ENCODE measurements at regions of chr6 and their contacts with region 1.

Region 1: GRCh38 chr6:143427109-143427817 is 23.2 kb downstream of the ADAT2 start:
- DNase-seq: no peak
- ATAC-seq: peak; percentile 100
- H3K4me3 ChIP-seq: no peak overlapping the region
- H3K27ac ChIP-seq: no peak overlapping the region
- H3K4me1 ChIP-seq: no peaks in the 10 kb centered on the region
- H3K27me3 ChIP-seq: no peaks in the 10 kb centered on the region
- CTCF ChIP-seq: peak; percentile 94 to 98 (median 96); a peak in 5 of 6 replicates
- EP300 ChIP-seq: no peak
- POLR2A ChIP-seq: no peak
- RAD21 ChIP-seq: peak; percentile 100

Region 2: DNA sequence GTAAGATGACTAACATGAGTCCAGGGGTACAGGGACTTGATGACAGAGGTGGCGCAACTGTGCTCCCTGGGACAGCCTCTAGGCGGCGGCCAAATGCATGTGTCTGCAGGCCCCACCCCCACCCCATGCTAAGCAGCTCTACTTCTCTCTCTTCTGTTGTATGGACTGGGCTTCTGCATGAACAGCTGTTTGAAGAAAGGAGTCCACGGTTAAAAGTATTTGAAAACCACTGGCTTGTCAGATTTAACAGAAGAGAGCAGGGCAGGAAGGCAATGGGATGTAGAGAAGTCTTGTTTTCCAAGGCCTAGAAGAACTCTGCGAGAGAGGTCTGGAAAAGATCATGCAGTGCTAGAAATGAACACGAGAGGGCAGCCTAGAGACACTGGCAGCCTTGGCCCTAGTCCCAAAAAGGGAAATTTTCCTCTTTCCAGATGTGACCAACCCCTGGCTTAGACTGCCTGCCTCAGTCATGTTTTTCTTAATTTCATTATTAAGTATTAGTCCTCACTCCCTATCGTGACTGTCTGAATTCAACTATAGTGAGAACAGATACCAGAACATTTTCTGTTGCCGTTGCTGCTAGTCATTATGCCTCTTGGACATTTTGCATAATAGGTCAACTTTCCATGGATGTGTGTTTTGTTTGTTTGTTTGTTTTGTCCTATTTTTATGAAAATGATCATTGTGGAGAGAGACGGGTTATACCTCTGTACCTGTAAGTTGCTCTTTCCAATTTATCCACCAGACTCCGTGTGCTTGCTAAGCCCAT is 860.5 kb before region 1 on chr6:
- CTCF ChIA-PET with region 1: interaction called, 7 read pairs
- POLR2A ChIA-PET with region 1: no interaction called
- RAD21 ChIA-PET with region 1: interaction called, 12 read pairs
- SMC1A ChIA-PET with region 1: interaction called, 3 read pairs
- in situ Hi-C with region 1: no loop called
- intact Hi-C with region 1: loop called (anchors 5 kb)
- DNase-seq: peak; percentile 11
- ATAC-seq: peak; percentile 81
- H3K4me3 ChIP-seq: no peak overlapping the region
- H3K27ac ChIP-seq: no peak overlapping the region
- H3K4me1 ChIP-seq: no peaks in the 10 kb centered on the region
- H3K27me3 ChIP-seq: no peaks in the 10 kb centered on the region
- CTCF ChIP-seq: peak; percentile 85 to 92 (median 91)
- EP300 ChIP-seq: no peak
- POLR2A ChIP-seq: no peak
- RAD21 ChIP-seq: peak; percentile 83

Region 3: GRCh38 chr6:142740449-142740848 is 686.8 kb before region 1 on chr6:
- CTCF ChIA-PET with region 1: no interaction called
- POLR2A ChIA-PET with region 1: no interaction called
- RAD21 ChIA-PET with region 1: no interaction called
- SMC1A ChIA-PET with region 1: no interaction called
- in situ Hi-C with region 1: no loop called
- intact Hi-C with region 1: no loop called
- DNase-seq: no peak
- ATAC-seq: no peak
- H3K4me3 ChIP-seq: no peak overlapping the region
- H3K27ac ChIP-seq: no peak overlapping the region
- H3K4me1 ChIP-seq: no peaks in the 10 kb centered on the region
- H3K27me3 ChIP-seq: no peaks in the 10 kb centered on the region
- CTCF ChIP-seq: no peak
- EP300 ChIP-seq: no peak
- POLR2A ChIP-seq: no peak
- RAD21 ChIP-seq: no peak

Region 4: DNA sequence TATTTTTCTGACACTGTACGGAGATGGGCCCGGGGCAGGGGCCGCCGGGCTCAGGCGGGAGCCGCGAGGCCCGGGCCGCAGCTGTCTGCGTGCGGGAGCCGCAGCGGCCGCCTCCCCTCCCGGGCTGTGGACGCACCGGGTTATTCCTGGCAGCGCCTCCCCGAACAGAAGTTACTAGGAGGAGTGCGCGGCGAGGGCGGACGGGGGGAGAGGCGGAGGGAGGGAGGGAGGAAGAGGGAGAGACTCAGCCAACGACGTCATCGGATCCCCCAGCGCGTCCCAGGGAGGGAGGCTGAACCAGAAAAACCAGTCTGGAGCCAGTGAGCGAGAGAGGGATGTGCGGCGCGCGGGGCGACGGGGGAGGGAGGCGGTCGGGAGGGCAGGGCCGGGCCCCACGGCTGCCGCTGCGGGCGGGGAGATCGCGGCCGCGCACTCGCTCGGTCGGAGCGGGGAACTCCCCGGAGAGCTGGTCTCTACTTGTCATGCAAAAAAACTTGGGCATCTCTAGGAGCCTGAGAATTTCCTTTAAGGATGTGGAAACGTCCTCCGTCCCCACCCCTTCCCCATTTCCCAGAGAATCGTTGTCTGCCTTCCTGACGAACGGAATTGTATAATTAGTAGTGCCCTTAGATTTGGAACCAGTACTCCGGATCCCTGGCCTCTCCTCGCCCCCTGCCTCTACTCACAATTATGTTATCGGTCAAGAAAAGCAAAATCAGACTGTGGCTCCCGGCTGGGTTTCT is 480.9 kb before region 1 on chr6:
- CTCF ChIA-PET with region 1: no interaction called
- POLR2A ChIA-PET with region 1: no interaction called
- RAD21 ChIA-PET with region 1: no interaction called
- SMC1A ChIA-PET with region 1: no interaction called
- in situ Hi-C with region 1: no loop called
- intact Hi-C with region 1: loop called (anchors 10 kb)
- DNase-seq: no peak
- ATAC-seq: peak; percentile 51
- H3K4me3 ChIP-seq: peak overlapping the region; percentile 94
- H3K27ac ChIP-seq: peak overlapping the region; percentile 98
- H3K4me1 ChIP-seq: peaks cover 9% of the 10 kb centered on the region; the same call in 1 of the 2 replicates
- H3K27me3 ChIP-seq: no peaks in the 10 kb centered on the region
- CTCF ChIP-seq: no peak
- EP300 ChIP-seq: no peak; a peak in 1 of 4 replicates
- POLR2A ChIP-seq: peak; percentile 52; the same call in 1 of the 2 replicates
- RAD21 ChIP-seq: no peak

Region 5: DNA sequence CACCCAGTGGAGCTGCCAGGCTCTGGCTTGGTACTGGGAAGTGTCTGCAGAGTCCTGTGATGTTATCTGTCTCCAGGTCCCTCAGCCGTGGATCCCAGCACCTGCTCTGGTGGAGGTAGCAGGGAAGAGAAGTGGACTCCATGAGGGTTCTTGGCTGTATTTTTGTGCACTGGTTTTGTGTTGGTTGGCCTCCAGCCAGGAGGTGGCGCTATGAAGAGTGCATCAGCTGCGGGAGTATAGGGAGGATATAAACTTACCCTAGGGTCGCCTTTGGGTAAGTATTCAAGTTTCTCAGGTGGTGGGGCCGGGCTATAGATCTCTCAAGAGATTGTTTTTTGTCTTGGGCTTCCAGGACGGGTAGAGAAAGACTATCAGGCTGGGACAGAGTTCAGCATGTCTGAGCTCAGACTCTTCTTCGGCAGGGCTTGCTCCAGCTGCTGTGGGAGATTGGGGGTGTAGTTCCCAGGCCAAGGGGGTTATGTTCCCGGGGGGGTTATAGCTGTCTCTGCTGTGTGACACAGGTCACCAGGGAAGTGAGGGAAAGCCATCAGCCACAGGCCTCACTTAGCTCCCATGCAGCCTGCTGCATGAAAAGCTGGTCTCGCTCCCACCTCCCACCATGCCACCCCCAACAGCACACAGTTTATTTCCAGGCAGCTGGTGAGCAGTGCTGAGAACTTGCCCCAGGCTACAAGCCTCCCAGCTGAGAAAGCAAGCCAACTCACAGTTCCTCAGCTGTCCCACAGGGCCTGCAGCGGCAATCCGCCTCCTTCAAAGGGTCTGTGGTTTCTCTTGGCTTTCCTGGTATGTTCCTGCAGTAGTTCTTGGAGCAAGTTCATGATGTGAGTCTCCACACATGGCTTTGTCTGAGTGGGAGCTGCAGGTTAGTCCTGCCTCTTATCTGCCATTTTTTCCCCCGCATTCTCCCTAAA is 250.9 kb before region 1 on chr6:
- CTCF ChIA-PET with region 1: no interaction called
- POLR2A ChIA-PET with region 1: no interaction called
- RAD21 ChIA-PET with region 1: no interaction called
- SMC1A ChIA-PET with region 1: no interaction called
- in situ Hi-C with region 1: no loop called
- intact Hi-C with region 1: no loop called
- DNase-seq: no peak
- ATAC-seq: no peak
- H3K4me3 ChIP-seq: no peak overlapping the region
- H3K27ac ChIP-seq: no peak overlapping the region
- H3K4me1 ChIP-seq: no peaks in the 10 kb centered on the region
- H3K27me3 ChIP-seq: no peaks in the 10 kb centered on the region
- CTCF ChIP-seq: no peak; a peak in 1 of 6 replicates
- EP300 ChIP-seq: no peak
- POLR2A ChIP-seq: no peak
- RAD21 ChIP-seq: no peak

Region 6: DNA sequence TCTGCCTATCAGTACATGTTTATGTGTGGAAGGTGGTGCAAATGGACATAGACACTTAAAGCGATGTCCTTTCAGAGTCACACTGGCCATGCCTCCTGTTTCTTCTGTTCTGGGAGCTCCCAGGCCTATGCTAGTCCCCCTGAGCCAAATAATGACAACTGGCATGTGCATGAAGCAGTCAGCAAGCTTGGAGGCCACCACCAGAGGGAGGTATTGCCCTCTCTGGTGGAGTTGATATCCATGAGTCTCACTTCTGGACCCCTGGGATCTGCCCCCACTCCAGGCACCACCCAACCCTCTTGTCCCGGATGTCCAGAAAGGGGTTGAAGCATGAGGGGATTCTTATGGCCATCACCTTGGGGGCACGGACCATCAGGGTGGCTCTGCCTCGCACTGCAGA is 194.4 kb before region 1 on chr6:
- CTCF ChIA-PET with region 1: interaction called, 59 read pairs
- POLR2A ChIA-PET with region 1: interaction called, 6 read pairs
- RAD21 ChIA-PET with region 1: interaction called, 30 read pairs
- SMC1A ChIA-PET with region 1: interaction called, 54 read pairs
- in situ Hi-C with region 1: no loop called
- intact Hi-C with region 1: loop called (anchors 1 kb)
- DNase-seq: peak; percentile 2
- ATAC-seq: peak; percentile 89
- H3K4me3 ChIP-seq: no peak overlapping the region
- H3K27ac ChIP-seq: no peak overlapping the region
- H3K4me1 ChIP-seq: no peaks in the 10 kb centered on the region
- H3K27me3 ChIP-seq: no peaks in the 10 kb centered on the region
- CTCF ChIP-seq: peak; percentile 62 to 70 (median 67)
- EP300 ChIP-seq: no peak
- POLR2A ChIP-seq: no peak
- RAD21 ChIP-seq: peak; percentile 82

Region 7: GRCh38 chr6:143337201-143337949 is 89.9 kb before region 1 on chr6:
- CTCF ChIA-PET with region 1: interaction called, 47 read pairs
- POLR2A ChIA-PET with region 1: no interaction called
- RAD21 ChIA-PET with region 1: interaction called, 26 read pairs
- SMC1A ChIA-PET with region 1: interaction called, 27 read pairs
- in situ Hi-C with region 1: no loop called
- intact Hi-C with region 1: loop called (anchors 1 kb)
- DNase-seq: no peak
- ATAC-seq: peak; percentile 98
- H3K4me3 ChIP-seq: no peak overlapping the region
- H3K27ac ChIP-seq: no peak overlapping the region
- H3K4me1 ChIP-seq: no peaks in the 10 kb centered on the region
- H3K27me3 ChIP-seq: no peaks in the 10 kb centered on the region
- CTCF ChIP-seq: peak; percentile 60 to 83 (median 66)
- EP300 ChIP-seq: no peak
- POLR2A ChIP-seq: no peak
- RAD21 ChIP-seq: peak; percentile 33

Region 8: DNA sequence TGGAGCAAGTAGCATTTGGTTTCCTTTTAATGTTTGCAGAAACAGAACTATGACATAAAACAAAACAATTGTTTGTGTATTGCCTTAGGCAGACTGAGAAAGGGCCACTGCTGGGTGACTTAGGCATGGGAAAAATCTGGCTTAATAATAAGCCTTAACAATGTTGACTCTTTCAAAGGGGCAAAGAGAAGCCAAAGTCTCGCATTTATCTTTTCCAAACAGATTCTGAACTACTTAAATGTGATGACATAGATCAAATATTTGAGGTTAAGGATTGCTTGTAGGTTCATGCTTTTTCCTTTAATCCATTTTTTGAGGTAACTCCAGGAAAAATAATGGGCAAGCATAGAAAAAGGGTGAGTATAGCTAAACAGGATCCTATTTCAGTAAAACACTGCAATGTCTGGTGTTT is 16.4 kb before region 1 on chr6:
- CTCF ChIA-PET with region 1: interaction called, 32 read pairs
- POLR2A ChIA-PET with region 1: no interaction called
- RAD21 ChIA-PET with region 1: interaction called, 6 read pairs
- SMC1A ChIA-PET with region 1: interaction called, 21 read pairs
- in situ Hi-C with region 1: no loop called
- intact Hi-C with region 1: no loop called
- DNase-seq: no peak
- ATAC-seq: no peak
- H3K4me3 ChIP-seq: no peak overlapping the region
- H3K27ac ChIP-seq: no peak overlapping the region
- H3K4me1 ChIP-seq: peaks cover 11% of the 10 kb centered on the region
- H3K27me3 ChIP-seq: no peaks in the 10 kb centered on the region
- CTCF ChIP-seq: no peak
- EP300 ChIP-seq: no peak
- POLR2A ChIP-seq: no peak
- RAD21 ChIP-seq: no peak

Region 9: GRCh38 chr6:143982968-143983367 is 555.7 kb after region 1 on chr6:
- CTCF ChIA-PET with region 1: no interaction called
- POLR2A ChIA-PET with region 1: no interaction called
- RAD21 ChIA-PET with region 1: no interaction called
- SMC1A ChIA-PET with region 1: no interaction called
- in situ Hi-C with region 1: no loop called
- intact Hi-C with region 1: no loop called
- DNase-seq: no peak
- ATAC-seq: no peak
- H3K4me3 ChIP-seq: no peak overlapping the region
- H3K27ac ChIP-seq: no peak overlapping the region
- H3K4me1 ChIP-seq: no peaks in the 10 kb centered on the region
- H3K27me3 ChIP-seq: no peaks in the 10 kb centered on the region
- CTCF ChIP-seq: no peak
- EP300 ChIP-seq: no peak
- POLR2A ChIP-seq: no peak
- RAD21 ChIP-seq: no peak

Measured in GM12878 (cell line).